ENCODE measurements at regions of chr3 and their contacts with region 1.

Region 1: GRCh38 chr3:146464005-146464595 is 5.3 kb downstream of the PLSCR2 start:
- DNase-seq: no peak
- H3K4me3 Mint-ChIP-seq: no peak overlapping the region
- H3K27ac Mint-ChIP-seq: no peak overlapping the region
- H3K4me1 Mint-ChIP-seq: peaks cover 14% of the 10 kb centered on the region
- H3K27me3 Mint-ChIP-seq: peaks cover 2% of the 10 kb centered on the region

Region 2: DNA sequence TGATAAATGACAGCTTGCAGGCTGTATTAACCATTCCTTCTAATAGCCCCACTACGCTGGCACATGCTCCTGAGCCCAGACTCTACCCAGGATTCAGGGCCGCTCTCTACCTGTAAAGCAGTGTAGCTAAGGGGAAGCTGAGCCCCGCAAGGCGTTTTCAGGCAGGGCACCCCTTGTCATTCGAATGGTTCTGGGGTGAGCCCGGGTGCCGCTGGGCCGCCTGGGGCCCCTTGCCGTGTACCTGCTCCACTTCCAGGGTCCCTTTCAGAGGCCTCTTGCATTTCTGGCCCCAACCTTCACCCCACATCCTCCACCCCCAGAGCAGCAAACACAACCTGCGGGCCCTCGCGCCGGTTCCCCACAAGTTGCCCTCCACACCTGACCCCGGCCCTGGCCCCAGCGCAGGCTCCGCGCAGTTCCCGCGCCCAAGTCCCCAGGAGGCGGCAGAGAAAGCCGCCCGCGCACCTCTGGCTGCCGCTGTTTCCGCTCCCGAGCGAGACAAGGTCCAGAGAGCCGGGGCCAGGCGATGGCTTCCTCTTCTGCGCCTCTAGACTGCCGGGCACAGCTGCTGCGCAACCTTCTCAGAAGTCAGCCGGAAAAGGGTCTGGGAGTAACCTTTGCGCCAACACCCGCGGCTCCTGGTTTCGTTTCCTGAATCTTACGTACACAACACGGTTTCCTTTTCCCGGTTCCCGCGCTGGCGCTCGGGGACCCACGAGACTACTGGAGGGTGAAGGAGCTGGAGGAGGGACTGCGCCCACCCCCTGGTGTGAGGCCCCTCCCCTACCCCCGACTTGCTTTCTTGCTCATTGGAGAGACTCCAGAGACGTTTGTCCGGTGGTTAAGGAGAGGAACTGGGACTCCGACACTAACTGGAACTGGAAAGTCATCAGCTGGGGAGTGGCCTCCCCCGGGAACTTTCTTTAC is 80.2 kb after region 1 on chr3 and contains the start of gene PLSCR1:
- intact Hi-C with region 1: loop called (anchors 2 kb)
- DNase-seq: peak; percentile 96
- H3K4me3 Mint-ChIP-seq: peak within 1 kb of the TSS; percentile 98
- H3K27ac Mint-ChIP-seq: peak within 1 kb of the TSS; percentile 94
- H3K4me1 Mint-ChIP-seq: peaks cover 68% of the 10 kb centered on the region
- H3K27me3 Mint-ChIP-seq: no peaks in the 10 kb centered on the region
- total RNA-seq, gene PLSCR1: 84.2 and 86.0 TPM in 2 replicates